Activated naive CD4-positive, alpha-beta T cell treated with anti-CD3 and anti-CD28 coated beads for 36 hours (primary cell): ENCODE measurements at regions of chr9 and their contacts with region 1.

Region 1: DNA sequence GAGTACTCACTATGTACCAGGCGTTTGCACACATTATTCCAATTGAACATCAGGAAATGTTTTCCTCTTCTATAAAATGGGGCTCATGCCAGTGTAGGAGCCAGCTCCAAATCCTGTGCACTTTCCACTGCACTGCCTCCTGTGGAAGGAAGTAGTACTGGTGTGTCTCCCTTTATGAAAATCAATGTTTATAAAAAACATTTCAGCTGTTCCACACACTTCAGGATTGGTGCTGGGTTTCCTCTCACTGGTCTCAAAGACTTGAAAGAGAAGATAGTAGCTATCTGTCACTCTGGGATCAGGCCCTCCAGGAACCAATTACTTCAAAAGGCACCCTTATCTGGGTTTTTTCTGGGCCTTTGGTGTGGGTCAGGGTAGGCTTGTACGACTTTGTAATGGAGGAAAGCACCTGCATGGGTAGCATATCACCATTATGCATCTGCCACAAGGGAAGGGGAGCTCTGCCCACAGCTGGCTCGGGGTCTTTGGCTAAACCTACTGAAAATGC is 32.5 kb downstream of the RAB14 start:
- DNase-seq: peak; percentile 36
- H3K4me3 Mint-ChIP-seq: no peak overlapping the region
- H3K27ac Mint-ChIP-seq: peak overlapping the region; percentile 54
- H3K4me1 Mint-ChIP-seq: peaks cover 21% of the 10 kb centered on the region
- H3K27me3 Mint-ChIP-seq: no peaks in the 10 kb centered on the region

Region 2: DNA sequence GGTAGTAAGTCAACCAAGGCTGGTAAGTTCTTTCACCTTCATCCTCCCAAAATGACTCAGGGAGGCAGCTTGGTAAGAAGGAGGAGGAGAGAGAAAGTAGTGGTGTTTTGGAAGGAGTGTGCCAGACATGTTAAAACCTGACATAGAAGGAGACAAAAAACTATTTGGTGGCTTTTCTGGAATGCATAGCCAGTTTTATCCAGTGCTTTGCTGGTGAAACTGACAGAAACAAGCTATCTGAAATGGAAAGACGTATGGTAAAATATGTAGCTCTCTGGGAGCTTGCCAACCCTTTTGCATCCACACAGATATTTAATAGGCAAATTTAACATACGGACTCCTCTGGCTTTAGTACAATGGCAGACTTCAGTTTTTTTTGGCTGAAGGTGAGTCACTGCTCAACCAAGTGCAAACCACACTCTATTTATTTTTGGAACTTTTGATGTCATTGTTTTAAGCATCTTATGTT is 12.9 kb before region 1 on chr9:
- CTCF ChIA-PET with region 1: interaction called, 20 read pairs
- intact Hi-C with region 1: no loop called
- DNase-seq: peak; percentile 26
- H3K4me3 Mint-ChIP-seq: no peak overlapping the region
- H3K27ac Mint-ChIP-seq: peak overlapping the region; percentile 87
- H3K4me1 Mint-ChIP-seq: peaks cover 31% of the 10 kb centered on the region
- H3K27me3 Mint-ChIP-seq: no peaks in the 10 kb centered on the region

Region 3: GRCh38 chr9:121179930-121180681 is 11.0 kb after region 1 on chr9:
- CTCF ChIA-PET with region 1: interaction called, 7 read pairs
- intact Hi-C with region 1: loop called (anchors 2 kb)
- DNase-seq: no peak
- H3K4me3 Mint-ChIP-seq: no peak overlapping the region
- H3K27ac Mint-ChIP-seq: peak overlapping the region; percentile 60
- H3K4me1 Mint-ChIP-seq: peaks cover 34% of the 10 kb centered on the region
- H3K27me3 Mint-ChIP-seq: no peaks in the 10 kb centered on the region